ENCODE measurements at regions of chrX and their contacts with region 1.

Region 1: DNA sequence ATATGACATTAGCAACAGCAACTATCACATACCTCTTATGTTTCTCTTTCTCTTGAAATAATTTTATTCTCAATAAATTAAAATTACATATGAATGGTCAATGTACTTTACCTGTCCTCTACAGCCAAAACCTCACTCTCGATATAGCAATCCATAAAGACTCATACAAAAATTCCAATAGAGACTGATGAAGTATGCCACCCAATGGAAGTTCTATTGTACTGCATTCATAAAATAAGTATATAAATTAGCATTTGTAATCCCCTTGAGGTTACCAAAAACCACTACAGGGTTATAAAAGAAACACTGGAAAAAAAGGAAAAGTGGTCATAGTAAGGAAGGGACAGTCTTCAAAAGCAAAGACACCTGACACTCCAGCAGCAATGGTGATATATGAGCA is 32.8 kb downstream of the CLDN2 start:
- DNase-seq: no peak
- H3K4me3 ChIP-seq: no peak overlapping the region
- H3K27ac ChIP-seq: no peak overlapping the region
- H3K4me1 ChIP-seq: no peaks in the 10 kb centered on the region
- H3K27me3 ChIP-seq: no peaks in the 10 kb centered on the region
- CTCF ChIP-seq: peak in 1 of 3 experiments; percentile 33

Region 2: GRCh38 chrX:106894392-106894909 is 58.5 kb before region 1 on chrX:
- intact Hi-C with region 1: loop called (anchors 2 kb)
- DNase-seq: no peak
- H3K4me3 ChIP-seq: no peak overlapping the region
- H3K27ac ChIP-seq: no peak overlapping the region
- H3K4me1 ChIP-seq: no peaks in the 10 kb centered on the region
- H3K27me3 ChIP-seq: no peaks in the 10 kb centered on the region
- CTCF ChIP-seq: peak; percentile 42 to 79 (median 75)

Region 3: DNA sequence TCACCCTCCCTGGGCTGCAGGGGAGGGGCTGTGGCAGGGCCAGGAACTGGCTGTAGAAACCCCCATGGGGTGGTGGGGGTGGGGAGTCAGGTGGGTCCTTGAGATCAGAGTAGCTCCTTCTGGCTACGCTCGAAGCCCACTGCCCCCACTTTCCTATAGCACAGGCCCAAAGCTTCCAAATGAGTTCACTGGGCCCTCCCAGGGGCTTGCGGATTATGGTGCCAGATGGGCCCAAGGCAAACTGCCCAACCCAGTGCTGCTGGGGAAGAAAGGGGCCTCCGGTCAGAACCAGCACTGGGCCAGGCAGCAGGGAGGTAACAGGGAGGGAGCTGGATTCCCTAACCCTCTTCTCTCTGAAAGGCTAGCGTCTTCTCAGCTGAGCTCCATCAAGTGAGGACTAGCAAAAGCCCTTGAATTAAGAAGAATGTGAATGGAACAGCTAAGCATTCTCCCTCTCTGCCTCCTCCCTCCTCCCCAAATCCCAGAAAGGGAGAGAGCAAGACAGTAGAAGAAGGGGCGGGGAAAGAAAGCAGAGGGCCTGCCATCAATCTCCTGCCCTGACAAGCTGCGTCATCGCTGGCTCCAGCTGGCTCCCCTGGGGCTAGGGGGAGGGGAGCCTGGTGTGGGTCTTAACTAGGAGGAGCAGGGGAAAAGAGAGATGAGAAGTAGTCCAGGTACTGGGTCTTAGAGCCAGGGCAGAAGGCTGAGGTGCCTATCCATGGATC is 531.2 kb after region 1 on chrX:
- intact Hi-C with region 1: no loop called
- DNase-seq: no peak
- H3K4me3 ChIP-seq: no peak overlapping the region
- H3K27ac ChIP-seq: no peak overlapping the region
- H3K4me1 ChIP-seq: no peaks in the 10 kb centered on the region
- H3K27me3 ChIP-seq: no peaks in the 10 kb centered on the region
- CTCF ChIP-seq: no peak